MCF 10A (cell line): ENCODE measurements at regions of chr6 and their contacts with region 1.

Region 1: DNA sequence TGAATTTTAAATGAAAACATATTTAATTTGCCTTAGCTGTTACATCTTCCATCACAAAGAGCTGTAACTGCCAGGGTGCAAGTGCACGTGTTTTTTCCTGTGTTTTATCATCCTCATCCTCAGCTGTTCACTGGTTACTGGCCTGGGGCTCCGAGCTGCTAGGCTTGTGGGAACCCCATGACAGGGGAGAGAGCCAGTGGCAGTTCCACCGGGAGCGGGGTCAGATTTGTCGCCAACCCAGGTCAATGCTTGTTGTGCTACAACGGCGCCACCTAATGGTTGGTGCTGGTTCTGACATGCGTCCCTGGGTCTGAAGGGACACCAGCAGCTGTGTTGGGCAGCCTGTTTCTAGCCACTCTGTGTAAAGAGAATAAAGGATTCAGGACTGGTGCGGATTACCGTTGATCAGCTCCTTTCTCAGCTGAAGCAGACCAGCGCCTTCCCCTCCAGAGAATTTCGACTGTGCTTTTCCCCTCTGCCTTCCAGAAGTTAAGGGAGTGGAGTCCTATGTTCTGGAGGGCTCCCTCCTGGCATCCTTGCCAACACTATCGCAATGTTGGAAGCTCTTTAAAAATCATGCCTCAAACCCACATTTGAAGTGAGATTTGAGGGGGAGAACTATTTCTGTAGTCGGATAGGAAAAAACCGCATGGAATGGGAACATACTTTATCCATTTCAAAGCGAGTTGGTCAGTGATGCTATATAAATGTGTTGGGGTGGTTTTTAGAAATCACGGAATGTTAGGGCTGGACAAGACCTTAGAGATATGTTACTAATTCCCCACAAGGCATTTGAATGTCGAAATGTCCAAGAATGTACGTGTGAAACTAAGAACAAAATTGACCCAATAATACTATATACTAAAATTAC is 32.1 kb downstream of the SUMO4 start:
- DNase-seq: peak; percentile 87
- H3K4me3 Mint-ChIP-seq: no peak overlapping the region
- H3K27ac Mint-ChIP-seq: no peak overlapping the region
- H3K4me1 Mint-ChIP-seq: peaks cover 4% of the 10 kb centered on the region
- H3K27me3 Mint-ChIP-seq: no peaks in the 10 kb centered on the region
- CTCF ChIP-seq: peak; percentile 92

Region 2: GRCh38 chr6:149043476-149044130 is 388.5 kb before region 1 on chr6:
- CTCF ChIA-PET with region 1: interaction called, 10 read pairs
- POLR2A ChIA-PET with region 1: no interaction called
- intact Hi-C with region 1: no loop called
- DNase-seq: peak; percentile 16
- H3K4me3 Mint-ChIP-seq: no peak overlapping the region
- H3K27ac Mint-ChIP-seq: no peak overlapping the region
- H3K4me1 Mint-ChIP-seq: no peaks in the 10 kb centered on the region
- H3K27me3 Mint-ChIP-seq: no peaks in the 10 kb centered on the region
- CTCF ChIP-seq: peak; percentile 24

Region 3: GRCh38 chr6:149129371-149130077 is 302.6 kb before region 1 on chr6:
- CTCF ChIA-PET with region 1: interaction called, 11 read pairs
- POLR2A ChIA-PET with region 1: interaction called, 3 read pairs
- intact Hi-C with region 1: no loop called
- DNase-seq: peak; percentile 91
- H3K4me3 Mint-ChIP-seq: no peak overlapping the region
- H3K27ac Mint-ChIP-seq: peak overlapping the region; percentile 11
- H3K4me1 Mint-ChIP-seq: peaks cover 30% of the 10 kb centered on the region
- H3K27me3 Mint-ChIP-seq: peaks cover 12% of the 10 kb centered on the region
- CTCF ChIP-seq: no peak

Region 4: DNA sequence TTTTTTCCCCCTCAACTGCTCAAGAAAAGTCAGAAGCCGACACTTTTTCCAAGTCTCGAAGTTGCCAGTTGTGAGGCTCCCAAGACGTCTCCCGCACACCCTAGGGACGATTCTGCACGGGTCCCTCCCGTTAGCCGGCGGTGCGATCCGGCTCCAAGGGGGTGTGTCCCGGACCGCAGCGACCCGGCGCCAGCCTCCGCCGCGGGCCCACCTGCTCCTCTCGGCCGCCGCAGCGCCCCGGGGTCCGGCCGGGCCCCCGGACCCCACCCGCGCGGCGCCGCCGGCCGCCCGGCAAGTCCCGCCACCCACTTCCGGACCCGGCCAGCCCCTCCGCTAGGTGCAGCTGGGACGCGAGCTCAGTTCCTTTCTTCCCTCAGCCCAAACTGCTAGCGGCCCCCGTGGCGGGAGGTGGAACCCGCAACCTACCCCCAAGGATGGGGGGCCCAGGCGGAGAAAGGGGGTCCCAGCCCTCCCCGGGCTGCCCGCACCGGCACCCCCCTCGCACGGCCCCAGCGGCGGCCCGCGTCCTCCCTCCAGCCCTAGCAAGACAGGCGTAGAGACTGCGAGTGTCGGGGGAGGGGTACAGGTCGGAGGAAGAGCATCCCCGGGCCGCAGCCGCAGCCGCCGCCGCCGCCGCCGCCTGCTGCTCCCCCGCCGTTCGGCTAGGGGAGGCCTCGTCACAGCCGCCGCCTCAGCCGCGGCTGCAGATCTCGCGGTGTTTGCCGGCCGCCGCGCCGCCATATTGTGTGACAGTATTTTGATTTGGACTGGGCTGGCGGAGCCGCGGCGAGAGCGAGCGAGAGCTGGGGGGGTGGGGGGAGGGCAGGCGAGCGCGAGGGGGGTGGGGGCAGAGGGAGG is 115.1 kb before region 1 on chr6:
- CTCF ChIA-PET with region 1: interaction called, 10 read pairs
- POLR2A ChIA-PET with region 1: interaction called, 10 read pairs
- intact Hi-C with region 1: loop called (anchors 1 kb)
- DNase-seq: peak; percentile 89
- H3K4me3 Mint-ChIP-seq: peak overlapping the region; percentile 82
- H3K27ac Mint-ChIP-seq: peak overlapping the region; percentile 54
- H3K4me1 Mint-ChIP-seq: peaks cover 15% of the 10 kb centered on the region
- H3K27me3 Mint-ChIP-seq: no peaks in the 10 kb centered on the region
- CTCF ChIP-seq: no peak

Region 5: GRCh38 chr6:149445095-149445466 is 12.9 kb after region 1 on chr6:
- CTCF ChIA-PET with region 1: interaction called, 19 read pairs
- POLR2A ChIA-PET with region 1: interaction called, 3 read pairs
- intact Hi-C with region 1: no loop called
- DNase-seq: no peak
- H3K4me3 Mint-ChIP-seq: no peak overlapping the region
- H3K27ac Mint-ChIP-seq: no peak overlapping the region
- H3K4me1 Mint-ChIP-seq: no peaks in the 10 kb centered on the region
- H3K27me3 Mint-ChIP-seq: no peaks in the 10 kb centered on the region
- CTCF ChIP-seq: no peak

Region 6: GRCh38 chr6:149565527-149566409 is 133.6 kb after region 1 on chr6 and contains the start of gene GINM1:
- CTCF ChIA-PET with region 1: no interaction called
- POLR2A ChIA-PET with region 1: no interaction called
- intact Hi-C with region 1: no loop called
- DNase-seq: peak; percentile 95
- H3K4me3 Mint-ChIP-seq: peak within 1 kb of the TSS; percentile 87
- H3K27ac Mint-ChIP-seq: peak within 1 kb of the TSS; percentile 61
- H3K4me1 Mint-ChIP-seq: peaks cover 7% of the 10 kb centered on the region
- H3K27me3 Mint-ChIP-seq: no peaks in the 10 kb centered on the region
- CTCF ChIP-seq: peak; percentile 61
- total RNA-seq, gene GINM1: 27.7 and 29.6 TPM in 2 replicates